ENCODE measurements at regions of chr4 and their contacts with region 1.

Region 1: DNA sequence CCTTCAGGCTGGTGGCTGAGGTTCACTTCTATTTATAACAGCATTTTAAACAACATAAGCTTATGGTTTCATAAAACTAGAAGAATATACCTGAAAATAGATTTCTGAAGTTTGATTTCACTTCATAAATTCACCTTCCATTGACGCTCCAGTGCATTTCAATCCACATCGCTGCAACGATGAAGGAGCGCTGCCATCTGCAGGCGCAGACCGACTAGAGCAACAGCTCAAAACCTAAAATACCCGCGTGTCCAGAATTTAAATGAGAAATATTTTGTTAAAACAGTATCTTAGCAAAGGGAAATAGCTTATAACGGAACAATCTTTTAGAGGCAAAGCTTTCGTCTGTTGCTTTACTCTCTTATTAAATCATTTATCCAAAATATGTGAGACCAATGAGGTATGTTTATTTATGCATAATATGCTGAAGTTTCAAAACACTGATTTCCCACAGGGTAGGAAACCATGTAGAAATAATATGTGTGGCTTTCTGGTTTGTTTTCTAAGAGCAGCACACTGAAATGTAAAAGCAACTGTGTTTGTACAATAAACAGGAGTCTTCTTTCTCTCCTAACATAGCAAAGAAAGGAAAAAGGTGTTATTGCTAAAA is 816.4 kb upstream of the FRG1 start:
- DNase-seq: no peak
- H3K4me3 ChIP-seq: no peak overlapping the region
- CTCF ChIP-seq: peak; percentile 73

Region 2: GRCh38 chr4:188960411-188961093 is 163.7 kb before region 1 on chr4:
- CTCF ChIA-PET with region 1: no interaction called
- POLR2A ChIA-PET with region 1: no interaction called
- DNase-seq: peak; percentile 29
- H3K4me3 ChIP-seq: no peak overlapping the region
- CTCF ChIP-seq: no peak

Region 3: GRCh38 chr4:188971125-188971524 is 153.1 kb before region 1 on chr4:
- CTCF ChIA-PET with region 1: interaction called, 17 read pairs
- POLR2A ChIA-PET with region 1: no interaction called
- DNase-seq: no peak
- H3K4me3 ChIP-seq: no peak overlapping the region
- CTCF ChIP-seq: peak; percentile 39

Region 4: DNA sequence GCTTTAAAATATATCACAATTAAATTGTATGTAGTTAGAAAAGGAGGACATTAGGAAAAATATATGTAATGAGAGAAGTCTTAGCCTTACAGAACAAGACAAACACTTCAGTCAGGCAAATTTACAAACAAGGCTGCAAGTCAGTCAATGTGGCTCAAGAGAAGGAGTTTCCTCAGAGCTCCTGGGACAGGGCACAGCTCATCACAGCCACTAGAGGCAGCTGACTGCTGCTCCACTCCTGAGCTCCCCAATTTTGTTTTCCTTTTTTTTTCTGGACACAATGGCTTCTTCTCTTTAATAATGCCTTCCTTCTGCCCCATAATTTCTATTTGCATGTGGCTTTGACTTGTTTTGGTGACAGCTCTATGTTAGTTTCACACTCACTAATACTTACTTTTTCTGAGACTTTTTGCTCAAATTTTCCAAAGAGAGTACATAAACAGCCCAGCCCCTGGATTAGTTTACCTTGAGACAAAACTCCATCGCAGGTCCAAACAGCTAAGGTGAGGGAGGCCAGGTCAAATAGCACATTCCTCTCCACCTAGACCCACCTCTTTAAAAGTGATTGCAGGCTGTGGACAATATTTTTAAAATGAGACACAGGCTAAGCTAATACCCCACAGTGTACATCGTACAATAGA is 34.0 kb before region 1 on chr4:
- CTCF ChIA-PET with region 1: interaction called, 11 read pairs
- POLR2A ChIA-PET with region 1: no interaction called
- DNase-seq: no peak
- H3K4me3 ChIP-seq: no peak overlapping the region
- CTCF ChIP-seq: peak; percentile 59

Region 5: DNA sequence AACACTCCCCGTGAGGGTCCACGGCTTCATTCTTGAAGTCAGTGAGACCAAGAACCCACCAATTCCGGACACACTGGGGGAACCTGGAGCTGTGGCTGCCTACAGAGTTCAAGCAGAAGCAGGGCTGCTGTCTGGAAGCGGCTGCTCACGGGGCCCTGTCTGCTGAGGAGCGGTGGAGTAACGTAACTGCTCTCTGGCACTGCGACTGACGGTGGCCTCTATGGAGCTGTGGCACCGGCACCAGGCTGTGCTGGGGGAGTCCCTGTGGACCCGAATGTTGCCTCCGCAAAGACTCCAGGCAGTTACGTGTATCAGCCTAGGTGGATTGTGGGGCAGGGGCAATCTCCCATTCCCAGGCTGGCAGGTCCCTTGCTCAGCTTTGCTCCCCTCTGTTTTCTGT is 113.1 kb after region 1 on chr4:
- CTCF ChIA-PET with region 1: no interaction called
- POLR2A ChIA-PET with region 1: no interaction called
- DNase-seq: no peak
- H3K4me3 ChIP-seq: no peak overlapping the region
- CTCF ChIP-seq: no peak

Region 6: DNA sequence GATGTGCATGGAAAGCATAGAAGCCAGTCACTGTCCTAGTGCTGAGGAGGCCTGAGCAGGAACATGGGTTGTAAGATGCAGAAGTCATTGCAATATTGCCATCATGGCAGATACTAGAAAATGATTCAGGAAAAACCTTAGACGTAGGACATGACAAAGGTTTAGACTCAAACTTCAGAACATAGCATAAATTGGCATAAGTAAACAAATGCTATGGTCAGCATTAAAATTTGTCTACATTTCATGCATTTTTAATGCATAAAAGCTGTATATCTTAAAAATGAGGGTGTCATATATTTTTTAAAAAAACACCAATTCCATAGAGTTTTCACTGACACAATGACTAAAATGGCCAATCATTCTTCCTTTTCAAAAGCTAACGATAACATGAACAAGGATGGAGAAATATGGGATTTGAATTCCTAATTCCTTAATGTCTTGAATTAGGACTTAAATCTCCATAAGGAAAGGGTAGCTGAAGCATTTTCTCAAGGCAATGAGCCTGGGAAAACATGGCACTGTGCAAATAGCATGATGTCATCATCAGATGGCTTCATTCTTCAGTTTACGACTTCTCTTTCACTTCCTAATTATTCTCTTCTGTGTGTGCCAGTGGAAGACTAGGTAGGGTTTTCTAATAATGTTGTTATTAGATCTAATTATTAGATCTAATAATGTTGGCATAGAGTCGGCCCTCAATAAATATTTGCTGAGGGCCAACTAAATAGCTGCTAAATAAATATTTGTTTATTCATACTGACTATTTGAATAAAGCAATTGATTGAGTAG is 691.3 kb after region 1 on chr4:
- CTCF ChIA-PET with region 1: no interaction called
- POLR2A ChIA-PET with region 1: no interaction called
- DNase-seq: no peak
- H3K4me3 ChIP-seq: no peak overlapping the region
- CTCF ChIP-seq: no peak